T-cell (primary cell): ENCODE measurements at regions of chr3 and their contacts with region 1.

Region 1: GRCh38 chr3:101377796-101378195 is 57.4 kb upstream of the IMPG2 start:
- DNase-seq: no peak
- ATAC-seq: no peak
- H3K4me3 ChIP-seq: no peak overlapping the region
- H3K4me3 Mint-ChIP-seq: no peak overlapping the region
- H3K27ac ChIP-seq: no peak overlapping the region
- H3K27ac Mint-ChIP-seq: peak overlapping the region; percentile 34 to 35
- H3K4me1 ChIP-seq: peaks cover 3 to 10% of the 10 kb centered on the region in 2 experiments
- H3K4me1 Mint-ChIP-seq: peaks cover 60 to 80% (median 61%) of the 10 kb centered on the region in 3 donors
- H3K27me3 ChIP-seq: no peaks in the 10 kb centered on the region
- H3K27me3 Mint-ChIP-seq: no peaks in the 10 kb centered on the region

Region 2: GRCh38 chr3:101391413-101391950 is 13.7 kb after region 1 on chr3:
- CTCF ChIA-PET with region 1: interaction called in 1 of 2 experiments, 6 read pairs
- POLR2A ChIA-PET with region 1: interaction called, 4 to 13 read pairs
- DNase-seq: no peak
- ATAC-seq: no peak
- H3K4me3 ChIP-seq: no peak overlapping the region
- H3K4me3 Mint-ChIP-seq: no peak overlapping the region
- H3K27ac ChIP-seq: no peak overlapping the region
- H3K27ac Mint-ChIP-seq: peak overlapping the region; percentile 70 to 77
- H3K4me1 ChIP-seq: peaks cover 0 to 17% of the 10 kb centered on the region in 2 experiments
- H3K4me1 Mint-ChIP-seq: peaks cover 43 to 53% (median 49%) of the 10 kb centered on the region in 3 donors
- H3K27me3 ChIP-seq: no peaks in the 10 kb centered on the region
- H3K27me3 Mint-ChIP-seq: no peaks in the 10 kb centered on the region

Region 3: GRCh38 chr3:101611023-101611422 is 233.2 kb after region 1 on chr3:
- CTCF ChIA-PET with region 1: no interaction called
- POLR2A ChIA-PET with region 1: no interaction called
- DNase-seq: no peak
- ATAC-seq: no peak
- H3K4me3 ChIP-seq: no peak overlapping the region
- H3K4me3 Mint-ChIP-seq: no peak overlapping the region
- H3K27ac ChIP-seq: no peak overlapping the region
- H3K27ac Mint-ChIP-seq: no peak overlapping the region
- H3K4me1 ChIP-seq: no peaks in the 10 kb centered on the region
- H3K4me1 Mint-ChIP-seq: no peaks in the 10 kb centered on the region
- H3K27me3 ChIP-seq: no peaks in the 10 kb centered on the region
- H3K27me3 Mint-ChIP-seq: no peaks in the 10 kb centered on the region